ENCODE measurements at regions of chr20 and their contacts with region 1.

Region 1: DNA sequence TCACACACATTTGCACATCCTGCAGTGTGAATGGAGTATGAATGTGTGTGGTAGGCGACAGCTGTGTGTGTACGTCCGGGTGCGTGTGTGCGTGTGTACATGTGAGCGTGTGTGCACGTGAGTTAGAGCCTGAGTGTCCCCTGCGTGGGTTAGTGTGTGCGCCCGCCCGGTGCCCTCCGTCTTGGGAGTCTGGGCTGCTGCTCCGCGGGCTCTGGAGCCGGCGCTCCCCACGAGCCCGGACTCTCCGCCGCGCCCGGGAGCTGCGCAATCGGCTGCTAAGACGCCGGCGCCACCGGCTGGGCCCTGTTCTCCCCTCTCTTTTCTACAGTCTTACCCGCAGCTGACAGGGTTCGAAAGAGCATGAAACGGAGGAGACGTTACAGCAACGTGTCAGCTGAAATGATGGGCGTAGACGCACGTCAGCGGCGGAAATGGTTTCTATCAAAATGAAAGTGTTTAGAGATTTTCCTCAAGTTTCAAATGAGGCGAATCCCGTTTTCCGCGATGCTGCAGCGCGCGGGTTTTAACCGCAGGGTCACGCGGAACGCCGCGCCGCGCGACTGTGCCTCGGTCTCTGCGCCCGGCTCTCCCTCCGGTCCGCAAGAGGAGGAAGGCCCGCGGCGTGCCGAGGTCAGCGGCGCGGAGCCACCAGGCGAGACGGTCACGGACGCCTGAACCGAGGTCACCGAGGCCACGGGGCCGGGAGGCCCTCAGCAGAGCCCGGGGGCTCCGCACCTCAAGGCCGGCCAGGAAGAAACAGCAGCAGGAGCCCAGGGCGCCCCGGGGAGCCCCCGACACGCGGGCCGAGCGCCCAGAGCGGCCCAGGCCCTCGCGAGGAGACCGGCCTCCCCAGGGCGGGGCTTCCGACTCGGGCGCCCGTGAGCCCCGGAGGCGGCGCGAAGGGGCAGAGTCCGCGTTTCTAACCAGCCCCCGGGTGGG is 95.3 kb upstream of the BHLHE23 start:
- DNase-seq: peak in 4 of 5 donors; percentile 19 to 69 (median 37)
- ATAC-seq: peak in 3 of 4 donors; percentile 24 to 81 (median 50)
- H3K4me3 ChIP-seq: peak overlapping the region; percentile 49 to 80 (median 62)
- H3K27ac ChIP-seq: peak overlapping the region in 8 of 12 donors; percentile 47 to 85 (median 60)
- H3K4me1 ChIP-seq: peaks cover 0 to 15% (median 1%) of the 10 kb centered on the region in 12 donors
- H3K27me3 ChIP-seq: peaks cover 3 to 39% (median 15%) of the 10 kb centered on the region in 9 donors
- CTCF ChIP-seq: no peak
- POLR2A ChIP-seq: no peak

Region 2: DNA sequence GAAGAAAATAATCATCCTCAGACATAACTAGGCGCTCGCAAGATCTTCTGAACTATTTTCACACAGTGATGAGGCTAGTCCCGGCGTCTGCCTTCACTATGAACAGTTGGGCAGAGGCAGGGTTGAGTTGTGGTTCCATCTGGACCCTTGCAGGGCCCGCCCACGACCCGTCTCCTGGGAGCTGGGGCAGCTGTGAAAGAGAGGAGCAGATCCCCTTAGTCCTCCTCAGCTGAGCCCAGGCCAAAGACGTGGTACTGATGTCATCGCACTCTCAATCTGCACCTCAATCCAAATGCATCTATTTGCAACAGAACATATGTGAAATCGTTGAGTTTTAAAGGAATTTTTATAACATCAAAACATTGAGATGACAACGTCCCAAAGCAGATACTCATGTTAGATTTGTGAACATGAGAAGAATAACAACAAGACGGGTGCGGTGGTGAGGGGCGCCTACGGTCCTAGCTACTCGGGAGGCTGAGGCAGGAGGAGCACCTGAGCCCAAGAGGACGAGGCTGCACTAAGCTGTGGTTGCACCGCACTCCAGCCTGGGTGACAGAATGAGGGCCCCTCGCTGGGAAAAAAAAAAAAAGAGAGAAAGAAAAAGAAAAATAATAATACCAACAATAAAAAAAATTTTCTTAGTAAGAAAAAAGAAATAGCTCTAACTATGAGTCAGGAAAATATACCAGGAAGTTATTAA is 255.7 kb before region 1 on chr20:
- intact Hi-C with region 1: no loop called
- DNase-seq: peak; percentile 64 to 82 (median 66)
- ATAC-seq: peak in 3 of 4 donors; percentile 45 to 84 (median 66)
- H3K4me3 ChIP-seq: no peak overlapping the region
- H3K27ac ChIP-seq: no peak overlapping the region
- H3K4me1 ChIP-seq: no peaks in the 10 kb centered on the region
- H3K27me3 ChIP-seq: no peaks in the 10 kb centered on the region
- CTCF ChIP-seq: no peak
- POLR2A ChIP-seq: no peak

Region 3: GRCh38 chr20:62900052-62900691 is 201.9 kb before region 1 on chr20:
- intact Hi-C with region 1: no loop called
- DNase-seq: peak; percentile 66 to 83 (median 73)
- ATAC-seq: peak; percentile 84 to 92 (median 90)
- H3K4me3 ChIP-seq: no peak overlapping the region
- H3K27ac ChIP-seq: no peak overlapping the region
- H3K4me1 ChIP-seq: peaks cover 6 to 28% (median 16%) of the 10 kb centered on the region in 12 donors
- H3K27me3 ChIP-seq: no peaks in the 10 kb centered on the region
- CTCF ChIP-seq: peak; percentile 76 to 93 (median 86)
- POLR2A ChIP-seq: no peak

Region 4: GRCh38 chr20:63156221-63156671 is 54.2 kb after region 1 on chr20:
- intact Hi-C with region 1: loop called in 1 of 10 experiments (anchors 5 kb)
- DNase-seq: peak in 3 of 5 donors; percentile 11 to 23 (median 21)
- ATAC-seq: no peak
- H3K4me3 ChIP-seq: no peak overlapping the region
- H3K27ac ChIP-seq: no peak overlapping the region
- H3K4me1 ChIP-seq: peaks cover 0 to 12% (median 0%) of the 10 kb centered on the region in 12 donors
- H3K27me3 ChIP-seq: peaks cover 4 to 68% (median 17%) of the 10 kb centered on the region in 9 donors
- CTCF ChIP-seq: no peak
- POLR2A ChIP-seq: no peak